PC-3 (cell line): ENCODE measurements at regions of chr1 and their contacts with region 1.

Region 1: DNA sequence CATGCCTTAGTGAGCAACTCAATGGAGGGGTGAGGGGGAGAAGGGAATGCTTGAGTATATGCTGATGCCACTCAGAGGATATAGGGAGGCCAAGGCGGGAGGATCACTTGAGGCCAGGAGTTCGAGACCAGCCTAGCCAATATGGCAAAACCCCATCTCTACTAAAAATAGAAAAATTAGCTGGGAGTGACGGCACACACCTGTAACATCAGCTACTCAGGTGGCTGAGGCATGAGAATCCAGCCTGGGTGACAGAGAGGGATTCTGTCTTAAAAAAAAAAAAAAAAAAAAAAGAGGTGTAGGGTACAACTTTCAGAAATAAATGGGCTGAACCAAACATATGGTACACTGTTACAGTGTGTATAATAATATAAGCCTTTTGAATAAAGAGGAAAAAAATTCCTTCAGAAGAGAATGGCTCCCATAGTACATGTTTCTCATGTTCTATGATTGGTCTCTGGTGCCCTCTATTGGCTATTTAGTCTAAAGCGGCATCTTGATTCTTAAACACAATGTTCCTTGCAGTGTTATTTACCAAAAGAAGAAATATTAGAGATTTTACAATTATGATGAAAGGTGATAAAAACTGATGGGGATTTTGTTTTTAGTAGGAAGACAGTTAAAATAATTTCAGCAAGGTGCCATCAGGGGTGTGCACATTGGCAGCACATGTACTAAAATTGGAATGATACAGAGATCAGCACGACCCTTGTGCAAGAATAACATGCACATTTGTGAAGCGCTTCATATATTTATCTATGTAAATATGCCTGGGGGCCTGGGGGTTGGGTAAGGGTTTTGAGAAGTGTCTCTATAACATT is 109.8 kb downstream of the PATJ start:
- DNase-seq: peak; percentile 79
- ATAC-seq: peak; percentile 81
- H3K4me3 ChIP-seq: no peak overlapping the region
- H3K27ac ChIP-seq: no peak overlapping the region
- H3K4me1 ChIP-seq: no peaks in the 10 kb centered on the region
- H3K27me3 ChIP-seq: no peaks in the 10 kb centered on the region
- CTCF ChIP-seq: peak; percentile 86

Region 2: GRCh38 chr1:61049850-61050540 is 802.1 kb before region 1 on chr1:
- CTCF ChIA-PET with region 1: interaction called, 4 read pairs
- POLR2A ChIA-PET with region 1: no interaction called
- intact Hi-C with region 1: loop called (anchors 10 kb)
- DNase-seq: peak; percentile 94
- ATAC-seq: peak; percentile 84
- H3K4me3 ChIP-seq: peak overlapping the region; percentile 87
- H3K27ac ChIP-seq: no peak overlapping the region
- H3K4me1 ChIP-seq: peaks cover 4% of the 10 kb centered on the region; the same call in 1 of the 2 replicates
- H3K27me3 ChIP-seq: no peaks in the 10 kb centered on the region
- CTCF ChIP-seq: peak; percentile 91

Region 3: DNA sequence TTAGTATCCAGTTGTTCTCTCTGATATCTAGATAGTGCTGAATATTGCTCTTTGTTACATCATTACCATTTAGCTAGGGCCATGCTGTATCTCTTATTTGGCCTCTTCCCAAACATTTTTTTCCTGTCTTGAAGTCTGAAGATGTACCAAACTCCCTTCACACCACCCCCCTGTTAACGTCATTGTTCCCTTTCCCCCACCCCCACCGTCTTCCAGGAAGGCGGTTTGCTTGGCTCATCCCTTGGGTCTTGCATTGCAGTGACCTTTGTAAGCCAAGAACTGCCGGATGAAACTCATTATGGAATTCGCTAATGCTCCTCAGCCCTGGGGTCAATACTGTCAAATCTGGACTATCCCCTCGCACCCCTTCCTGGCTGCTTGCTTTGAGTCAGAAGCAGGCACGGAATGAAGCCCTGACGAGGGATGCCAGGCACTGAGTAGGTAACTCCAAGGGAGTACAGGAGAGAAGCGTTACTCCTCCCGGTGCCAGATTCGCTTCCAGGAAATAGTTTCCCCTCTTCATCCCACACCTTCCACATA is 410.3 kb before region 1 on chr1:
- CTCF ChIA-PET with region 1: no interaction called
- POLR2A ChIA-PET with region 1: no interaction called
- intact Hi-C with region 1: no loop called
- DNase-seq: no peak
- ATAC-seq: no peak
- H3K4me3 ChIP-seq: no peak overlapping the region
- H3K27ac ChIP-seq: no peak overlapping the region
- H3K4me1 ChIP-seq: no peaks in the 10 kb centered on the region
- H3K27me3 ChIP-seq: no peaks in the 10 kb centered on the region
- CTCF ChIP-seq: no peak

Region 4: DNA sequence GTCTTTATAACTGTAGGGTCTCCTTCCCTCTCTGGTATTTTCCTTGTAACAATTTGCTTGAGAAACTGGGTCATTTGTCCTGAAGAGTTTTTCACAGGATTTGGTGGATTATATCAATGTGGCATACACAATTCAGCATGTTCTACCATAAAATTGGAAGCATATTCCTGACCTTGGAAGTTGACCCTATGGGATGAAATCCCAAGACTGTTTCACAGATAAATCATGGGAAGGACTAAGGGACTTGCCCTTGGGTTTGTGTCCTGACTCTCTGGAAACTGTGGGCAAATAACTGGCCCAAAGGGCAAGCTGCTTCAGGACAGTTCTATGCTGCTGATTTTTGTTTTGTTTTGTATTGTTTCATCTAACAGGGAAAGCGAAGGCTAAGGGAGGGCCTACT is 382.7 kb before region 1 on chr1:
- CTCF ChIA-PET with region 1: no interaction called
- POLR2A ChIA-PET with region 1: no interaction called
- intact Hi-C with region 1: loop called (anchors 5 kb)
- DNase-seq: no peak
- ATAC-seq: no peak
- H3K4me3 ChIP-seq: no peak overlapping the region
- H3K27ac ChIP-seq: no peak overlapping the region
- H3K4me1 ChIP-seq: no peaks in the 10 kb centered on the region
- H3K27me3 ChIP-seq: no peaks in the 10 kb centered on the region
- CTCF ChIP-seq: no peak

Region 5: GRCh38 chr1:61606448-61607312 is 245.4 kb before region 1 on chr1:
- CTCF ChIA-PET with region 1: no interaction called
- POLR2A ChIA-PET with region 1: no interaction called
- intact Hi-C with region 1: loop called (anchors 5 kb)
- DNase-seq: peak; percentile 12
- ATAC-seq: no peak
- H3K4me3 ChIP-seq: no peak overlapping the region
- H3K27ac ChIP-seq: peak overlapping the region; percentile 42
- H3K4me1 ChIP-seq: peaks cover 16% of the 10 kb centered on the region
- H3K27me3 ChIP-seq: no peaks in the 10 kb centered on the region
- CTCF ChIP-seq: no peak

Region 6: DNA sequence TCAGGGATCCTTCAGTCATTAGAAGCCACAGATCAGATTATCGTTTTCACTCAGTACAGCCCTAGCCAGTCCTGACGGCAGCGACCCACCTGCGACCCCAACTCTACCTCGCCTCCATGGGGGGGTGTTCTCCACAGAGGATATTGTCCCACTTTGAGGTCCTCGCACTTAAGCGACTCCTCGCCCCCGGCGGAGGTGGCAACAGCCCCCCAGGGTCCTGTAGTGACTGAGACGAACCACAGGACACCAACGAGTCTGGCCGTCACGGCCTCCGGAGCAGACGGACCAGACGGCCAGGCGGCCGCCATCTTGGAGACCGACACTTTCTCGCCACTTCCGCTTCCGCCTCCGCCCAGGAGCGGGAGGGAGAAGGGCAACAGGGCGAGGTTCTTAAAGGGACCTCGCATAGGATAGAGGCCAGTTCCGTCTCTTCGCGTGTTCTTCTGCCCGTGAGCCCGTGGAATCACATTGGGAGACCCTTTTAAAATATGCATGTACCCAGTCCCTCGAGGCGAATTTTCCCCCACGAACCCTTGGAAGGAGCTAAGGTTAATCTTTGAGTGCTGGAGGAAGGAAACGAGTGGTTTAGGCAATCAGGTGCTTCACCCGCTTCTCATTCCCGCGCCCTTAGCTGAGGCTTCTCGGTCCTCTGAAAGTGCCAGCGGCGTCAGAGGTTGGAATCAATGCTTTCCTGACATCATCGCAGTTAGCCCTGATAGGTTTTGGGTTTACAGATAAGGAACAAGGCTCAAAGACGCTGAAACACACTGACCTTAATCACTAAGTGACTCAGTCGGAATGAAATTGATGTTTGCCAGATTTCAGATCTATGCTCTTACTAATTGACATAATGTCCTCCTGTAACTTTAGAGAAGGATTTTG is 127.0 kb before region 1 on chr1 and contains the start of gene TM2D1:
- CTCF ChIA-PET with region 1: interaction called, 4 read pairs
- POLR2A ChIA-PET with region 1: no interaction called
- intact Hi-C with region 1: loop called (anchors 1 kb)
- DNase-seq: peak; percentile 92
- ATAC-seq: peak; percentile 98
- H3K4me3 ChIP-seq: peak within 1 kb of the TSS; percentile 93
- H3K27ac ChIP-seq: peak within 1 kb of the TSS; percentile 59
- H3K4me1 ChIP-seq: peaks cover 18% of the 10 kb centered on the region
- H3K27me3 ChIP-seq: no peaks in the 10 kb centered on the region
- CTCF ChIP-seq: no peak
- total RNA-seq, gene TM2D1: 24.6 and 48.0 TPM in 2 replicates